ENCODE measurements at regions of chr14 and their contacts with region 1.

Region 1: GRCh38 chr14:24271134-24271833 is at the start of gene RABGGTA:
- DNase-seq: peak; percentile 88
- H3K4me3 Mint-ChIP-seq: peak within 1 kb of the TSS; percentile 89
- H3K27ac Mint-ChIP-seq: peak within 1 kb of the TSS; percentile 16
- H3K4me1 Mint-ChIP-seq: peaks cover 43% of the 10 kb centered on the region
- H3K27me3 Mint-ChIP-seq: no peaks in the 10 kb centered on the region
- CTCF ChIP-seq: peak; percentile 67
- total RNA-seq, gene RABGGTA: 51.7 and 75.0 TPM in 2 replicates

Region 2: DNA sequence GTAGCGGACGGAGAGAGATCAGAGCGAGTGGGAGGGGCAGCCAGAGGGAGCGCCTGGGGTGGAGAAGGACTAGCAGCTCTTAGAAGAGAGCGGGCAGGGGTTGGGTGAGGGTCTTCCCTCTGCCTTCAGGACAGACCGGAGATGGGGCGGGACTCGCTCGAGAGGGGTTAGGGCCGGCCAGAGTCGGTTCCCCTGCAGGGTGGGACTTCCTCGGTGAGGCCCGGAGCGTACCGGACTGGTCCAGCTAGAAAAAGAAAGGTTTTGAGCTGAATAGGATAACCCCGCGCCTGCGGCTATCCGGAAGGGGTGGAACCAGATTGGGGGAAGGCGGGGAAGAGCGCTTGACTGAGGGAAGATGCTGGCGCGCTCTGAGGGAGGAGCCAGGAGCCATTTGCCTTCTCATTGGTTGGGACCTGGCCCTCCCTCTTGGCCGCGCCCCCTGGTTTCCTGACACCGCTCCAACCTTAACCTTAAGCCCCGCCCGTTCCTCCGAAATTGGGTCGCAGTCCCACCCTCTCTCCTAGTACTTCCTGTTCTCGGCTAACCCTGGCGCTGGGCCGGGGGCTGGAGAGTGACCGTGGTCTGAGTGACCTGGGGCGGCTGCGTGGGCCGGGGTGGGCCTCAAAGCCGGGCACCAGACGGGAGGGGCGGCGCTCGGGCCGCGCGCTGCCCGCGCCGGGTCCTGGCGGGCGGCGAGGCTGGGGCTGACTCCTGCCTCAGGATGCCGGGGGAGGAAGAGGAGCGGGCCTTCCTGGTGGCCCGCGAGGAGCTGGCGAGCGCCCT is 124.1 kb before region 1 on chr14 and contains the start of gene RNF31:
- CTCF ChIA-PET with region 1: interaction called, 3 read pairs
- POLR2A ChIA-PET with region 1: interaction called, 10 read pairs
- intact Hi-C with region 1: no loop called
- DNase-seq: peak; percentile 99
- H3K4me3 Mint-ChIP-seq: peak within 1 kb of the TSS; percentile 98
- H3K27ac Mint-ChIP-seq: peak within 1 kb of the TSS; percentile 61
- H3K4me1 Mint-ChIP-seq: peaks cover under 1% of the 10 kb centered on the region
- H3K27me3 Mint-ChIP-seq: no peaks in the 10 kb centered on the region
- CTCF ChIP-seq: no peak
- total RNA-seq, gene RNF31: 62.2 and 67.4 TPM in 2 replicates

Region 3: DNA sequence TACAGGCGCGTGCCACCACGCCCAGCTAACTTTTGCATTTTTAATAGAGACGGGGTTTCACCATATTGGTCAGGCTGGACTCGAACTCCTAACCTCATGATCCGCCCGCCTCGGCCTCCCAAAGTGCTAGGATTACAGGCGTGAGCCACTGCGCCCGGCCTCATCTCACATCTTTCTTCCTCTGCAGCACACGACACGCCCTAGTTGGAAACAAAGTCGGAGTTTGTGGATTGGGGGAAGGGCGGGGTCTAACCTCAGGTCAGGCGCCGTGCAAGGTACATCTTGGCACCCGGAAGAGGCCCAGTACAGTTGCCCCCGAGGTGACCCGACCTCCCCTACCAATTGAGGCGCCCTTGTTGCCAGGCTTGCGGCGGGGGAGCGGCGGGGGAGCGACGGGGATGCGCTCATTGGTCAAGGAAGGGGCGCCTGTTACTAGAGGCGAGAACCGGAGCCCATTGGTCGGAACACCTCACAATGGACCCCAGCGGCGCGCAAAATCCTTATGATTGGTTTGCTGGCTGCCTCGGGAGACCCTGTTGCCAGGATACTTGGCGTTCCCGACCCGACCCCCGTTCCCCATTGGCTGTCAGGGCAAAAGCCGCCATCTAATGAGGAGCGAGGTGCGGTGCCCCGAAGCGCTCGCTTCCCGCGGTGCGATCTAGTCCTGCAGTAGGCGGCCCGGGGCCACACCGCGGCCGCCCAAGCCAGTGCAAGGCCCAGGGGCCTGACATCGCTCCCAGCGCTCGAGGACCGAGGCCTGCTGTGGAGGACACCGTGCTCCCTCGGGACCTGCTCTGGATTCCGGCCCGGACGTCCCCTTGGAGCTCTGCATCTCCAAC is 99.6 kb before region 1 on chr14 and contains the start of gene REC8:
- CTCF ChIA-PET with region 1: no interaction called
- POLR2A ChIA-PET with region 1: no interaction called
- intact Hi-C with region 1: no loop called
- DNase-seq: no peak
- H3K4me3 Mint-ChIP-seq: no peak within 1 kb of the TSS
- H3K27ac Mint-ChIP-seq: no peak within 1 kb of the TSS
- H3K4me1 Mint-ChIP-seq: peaks cover 8% of the 10 kb centered on the region
- H3K27me3 Mint-ChIP-seq: no peaks in the 10 kb centered on the region
- CTCF ChIP-seq: no peak
- total RNA-seq, gene REC8: 6.1 and 12.1 TPM in 2 replicates

Region 4: DNA sequence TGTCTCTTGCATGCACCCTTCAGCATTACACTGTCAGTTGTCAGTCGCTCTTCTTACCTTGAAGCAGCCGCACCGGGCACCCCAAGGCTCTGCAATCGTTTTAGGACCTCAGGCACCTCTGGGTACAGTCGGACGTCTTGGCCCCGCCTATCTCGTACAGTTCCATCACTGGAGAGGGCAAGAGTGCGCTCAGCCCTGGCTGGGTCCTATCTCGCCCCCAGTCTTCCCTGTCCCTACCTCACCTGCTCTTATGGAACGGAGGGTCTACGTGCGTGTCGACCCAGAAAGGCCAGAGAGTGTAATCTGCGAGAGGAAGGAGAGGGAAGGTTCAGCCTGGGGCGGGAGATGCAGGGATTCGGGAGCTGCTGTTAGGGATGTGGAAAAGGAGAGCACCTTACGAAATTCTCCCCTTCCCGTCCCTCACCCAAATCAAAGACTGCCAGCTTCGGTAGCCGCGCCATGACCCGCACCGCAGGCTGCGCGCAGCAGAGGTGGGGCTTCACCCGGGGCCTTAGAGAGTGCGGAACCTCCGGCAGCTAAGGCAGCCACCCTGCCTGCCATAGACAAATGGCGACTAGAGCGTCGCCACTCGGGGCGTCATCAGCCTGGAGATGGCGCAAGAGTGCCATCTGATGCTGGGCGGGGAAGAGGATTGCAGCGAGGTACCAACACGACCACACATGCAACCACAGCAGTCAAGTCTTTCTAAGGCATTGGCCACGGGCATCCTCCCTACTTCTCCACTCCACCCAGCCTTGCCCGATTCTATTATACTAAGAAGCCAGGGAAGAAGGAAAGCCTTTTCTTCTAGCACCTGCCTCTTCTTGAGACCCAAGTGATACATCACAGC is 55.6 kb before region 1 on chr14 and contains the start of gene MDP1:
- CTCF ChIA-PET with region 1: interaction called, 9 read pairs
- POLR2A ChIA-PET with region 1: interaction called, 14 read pairs
- intact Hi-C with region 1: no loop called
- DNase-seq: peak; percentile 87
- H3K4me3 Mint-ChIP-seq: peak within 1 kb of the TSS; percentile 80
- H3K27ac Mint-ChIP-seq: peak within 1 kb of the TSS; percentile 73
- H3K4me1 Mint-ChIP-seq: peaks cover 20% of the 10 kb centered on the region
- H3K27me3 Mint-ChIP-seq: no peaks in the 10 kb centered on the region
- CTCF ChIP-seq: peak; percentile 25
- total RNA-seq, gene MDP1: 11.0 and 20.2 TPM in 2 replicates

Region 5: GRCh38 chr14:24259252-24259995 is 11.9 kb before region 1 on chr14:
- CTCF ChIA-PET with region 1: interaction called, 7 read pairs
- POLR2A ChIA-PET with region 1: interaction called, 48 read pairs
- intact Hi-C with region 1: no loop called
- DNase-seq: peak; percentile 66
- H3K4me3 Mint-ChIP-seq: peak overlapping the region; percentile 57
- H3K27ac Mint-ChIP-seq: peak overlapping the region; percentile 97
- H3K4me1 Mint-ChIP-seq: peaks cover 47% of the 10 kb centered on the region
- H3K27me3 Mint-ChIP-seq: no peaks in the 10 kb centered on the region
- CTCF ChIP-seq: no peak

Region 6: GRCh38 chr14:24289649-24290249 is 18.5 kb after region 1 on chr14:
- CTCF ChIA-PET with region 1: interaction called, 392 read pairs
- POLR2A ChIA-PET with region 1: interaction called, 115 read pairs
- intact Hi-C with region 1: no loop called
- DNase-seq: no peak
- H3K4me3 Mint-ChIP-seq: no peak overlapping the region
- H3K27ac Mint-ChIP-seq: peak overlapping the region; percentile 73
- H3K4me1 Mint-ChIP-seq: peaks cover 13% of the 10 kb centered on the region
- H3K27me3 Mint-ChIP-seq: no peaks in the 10 kb centered on the region
- CTCF ChIP-seq: no peak

Region 7: DNA sequence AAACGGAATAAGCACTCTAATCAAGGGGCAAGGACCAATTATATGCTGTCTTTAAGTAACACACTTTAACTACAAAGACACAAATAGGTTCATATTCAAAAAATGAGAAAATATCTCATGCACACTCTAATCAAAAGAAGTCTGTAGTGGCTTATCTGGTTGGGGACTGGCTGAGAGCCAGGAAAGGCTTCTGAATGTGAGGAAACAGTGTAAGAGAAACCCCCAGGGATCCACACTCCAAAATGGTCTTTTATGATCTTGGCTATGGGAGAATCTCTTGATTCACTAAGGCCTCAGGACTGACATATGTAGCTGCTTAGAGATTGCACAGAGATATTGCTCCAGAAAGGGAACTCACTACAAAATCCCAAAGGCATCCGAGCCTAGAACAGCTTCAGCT is 294.5 kb after region 1 on chr14:
- CTCF ChIA-PET with region 1: no interaction called
- POLR2A ChIA-PET with region 1: no interaction called
- intact Hi-C with region 1: no loop called
- DNase-seq: no peak
- H3K4me3 Mint-ChIP-seq: no peak overlapping the region
- H3K27ac Mint-ChIP-seq: no peak overlapping the region
- H3K4me1 Mint-ChIP-seq: no peaks in the 10 kb centered on the region
- H3K27me3 Mint-ChIP-seq: peaks cover 6% of the 10 kb centered on the region
- CTCF ChIP-seq: no peak

Measured in MCF 10A (cell line).